Panc1 (cell line): ENCODE measurements at regions of chr12 and their contacts with region 1.

Region 1: DNA sequence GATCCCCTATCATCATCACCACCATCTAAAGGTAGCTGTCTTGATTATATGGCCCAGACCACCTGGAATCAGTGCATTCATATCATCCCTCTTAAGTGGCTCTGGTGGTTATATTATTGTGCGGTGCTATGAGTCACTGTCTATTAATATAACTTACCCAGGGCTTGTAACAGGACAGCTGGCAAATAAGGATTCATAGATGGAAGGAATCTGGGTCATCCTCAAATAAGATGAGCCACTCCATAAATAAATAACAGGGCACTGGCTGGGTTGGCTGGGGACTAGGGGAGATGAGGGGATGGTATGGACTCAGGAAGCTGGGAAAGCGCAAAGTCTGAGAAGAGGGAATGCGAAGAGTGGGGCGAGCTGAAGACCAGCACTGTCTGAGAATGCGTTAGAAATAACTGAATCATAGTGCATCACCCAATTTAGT is 216.1 kb downstream of the NUAK1 start:
- DNase-seq: no peak
- ATAC-seq: no peak
- H3K4me3 ChIP-seq: no peak overlapping the region
- H3K27ac ChIP-seq: no peak overlapping the region; the same call in 1 of the 2 replicates
- H3K4me1 ChIP-seq: peaks cover 5% of the 10 kb centered on the region
- H3K27me3 ChIP-seq: no peaks in the 10 kb centered on the region
- CTCF ChIP-seq: no peak

Region 2: DNA sequence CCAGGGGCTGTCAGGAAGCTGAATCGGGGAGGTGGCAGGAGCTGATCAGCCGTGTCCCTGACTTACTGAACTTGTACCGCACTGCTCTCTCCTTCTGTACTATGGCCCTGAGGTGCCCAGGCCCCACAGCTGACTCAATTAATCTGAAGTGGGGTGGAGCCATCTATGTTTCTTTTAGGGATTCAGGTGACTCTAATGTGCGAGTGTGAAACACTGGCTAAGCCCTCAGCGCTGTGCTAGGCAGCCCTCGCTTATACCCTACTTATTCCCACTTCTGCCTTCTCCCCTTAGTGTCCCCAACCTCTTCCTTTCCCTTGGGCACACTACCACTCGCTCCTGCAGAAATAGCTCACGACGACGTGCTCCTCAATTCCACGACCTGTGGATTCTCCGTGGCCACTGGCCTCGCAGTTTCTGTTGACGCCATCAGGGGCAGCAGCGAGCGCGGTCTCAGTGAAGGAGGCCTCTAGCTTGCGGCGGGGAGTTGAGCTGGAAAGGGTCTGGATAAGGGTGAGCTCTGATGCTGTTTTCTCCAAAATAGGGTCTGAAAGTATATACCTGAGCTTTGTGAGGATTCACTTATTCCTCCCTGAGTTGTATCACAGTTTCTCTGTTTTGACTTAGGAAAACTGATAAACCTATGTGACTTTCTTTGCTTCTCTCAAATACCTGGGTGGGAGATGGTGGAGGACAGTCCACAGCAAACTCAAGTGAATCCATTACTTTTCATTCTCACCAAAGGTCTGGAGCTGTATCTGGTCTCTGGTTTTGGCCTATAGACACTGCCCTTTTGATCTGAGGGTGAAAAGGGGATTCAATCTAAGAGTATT is 1132.2 kb before region 1 on chr12:
- CTCF ChIA-PET with region 1: no interaction called
- POLR2A ChIA-PET with region 1: no interaction called
- in situ Hi-C with region 1: no loop called
- intact Hi-C with region 1: no loop called
- DNase-seq: peak; percentile 15
- ATAC-seq: peak; percentile 83
- H3K4me3 ChIP-seq: peak overlapping the region in 1 of 2 experiments; percentile 25; a peak in 1 of 4 replicates
- H3K27ac ChIP-seq: no peak overlapping the region
- H3K4me1 ChIP-seq: no peaks in the 10 kb centered on the region; the same call in 1 of the 2 replicates
- H3K27me3 ChIP-seq: no peaks in the 10 kb centered on the region
- CTCF ChIP-seq: peak; percentile 95

Region 3: DNA sequence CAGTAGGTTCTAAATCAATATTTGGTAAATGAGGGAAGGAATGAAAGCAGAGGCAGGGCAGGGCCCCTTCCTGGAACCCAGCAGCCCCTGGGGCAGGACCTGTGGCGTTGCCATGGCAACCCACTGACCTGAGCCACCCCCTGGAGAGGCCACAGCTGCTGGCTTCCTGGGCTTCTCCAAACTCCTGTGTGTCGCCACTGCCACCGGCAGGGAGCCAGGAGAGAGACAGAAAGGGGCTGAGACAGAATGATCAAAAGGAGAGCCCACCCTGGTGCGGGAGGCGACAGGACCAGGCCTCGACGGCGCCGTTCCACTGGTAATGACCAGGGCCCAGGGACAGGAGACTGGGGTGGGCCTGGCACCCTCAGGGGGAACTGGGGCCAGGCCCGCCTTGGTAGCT is 678.3 kb after region 1 on chr12:
- CTCF ChIA-PET with region 1: no interaction called
- POLR2A ChIA-PET with region 1: no interaction called
- in situ Hi-C with region 1: no loop called
- intact Hi-C with region 1: loop called (anchors 5 kb)
- DNase-seq: no peak
- ATAC-seq: no peak
- H3K4me3 ChIP-seq: no peak overlapping the region
- H3K27ac ChIP-seq: no peak overlapping the region
- H3K4me1 ChIP-seq: no peaks in the 10 kb centered on the region
- H3K27me3 ChIP-seq: peaks cover 13% of the 10 kb centered on the region
- CTCF ChIP-seq: no peak